ENCODE measurements at regions of chr6 and their contacts with region 1.

Region 1: DNA sequence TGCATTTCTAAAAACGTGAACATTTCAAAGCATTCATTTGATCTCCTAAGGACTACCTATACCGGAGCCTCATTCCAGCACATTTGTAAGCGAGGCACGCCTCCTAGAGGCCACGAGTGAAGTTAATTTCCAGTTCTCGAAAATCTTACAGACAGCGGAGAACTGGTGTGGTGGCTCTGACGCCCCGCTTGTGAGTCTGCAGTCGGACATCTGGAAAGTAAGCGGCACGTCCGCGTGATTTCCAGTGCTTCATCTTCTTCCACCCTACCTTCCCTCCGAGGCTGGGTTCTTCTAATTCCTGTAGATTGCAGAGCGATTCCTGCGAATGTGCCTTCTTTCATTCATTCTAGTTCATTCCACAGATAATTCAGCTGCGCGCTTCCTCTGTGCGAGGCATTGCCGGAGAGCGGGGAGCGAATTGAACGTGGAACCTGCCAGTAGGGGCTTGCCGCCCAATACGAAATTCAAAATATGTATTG is 810 bp upstream of the PRIM2 start:
- DNase-seq: peak; percentile 76
- H3K4me3 Mint-ChIP-seq: peak overlapping the region; percentile 100
- H3K27ac Mint-ChIP-seq: peak overlapping the region; percentile 95
- H3K4me1 Mint-ChIP-seq: peaks cover 23% of the 10 kb centered on the region
- H3K27me3 Mint-ChIP-seq: peaks cover 12% of the 10 kb centered on the region

Region 2: GRCh38 chr6:56904068-56904467 is 412.6 kb before region 1 on chr6:
- intact Hi-C with region 1: loop called (anchors 1 kb)
- DNase-seq: no peak
- H3K4me3 Mint-ChIP-seq: no peak overlapping the region
- H3K27ac Mint-ChIP-seq: no peak overlapping the region
- H3K4me1 Mint-ChIP-seq: no peaks in the 10 kb centered on the region
- H3K27me3 Mint-ChIP-seq: peaks cover 22% of the 10 kb centered on the region

Region 3: DNA sequence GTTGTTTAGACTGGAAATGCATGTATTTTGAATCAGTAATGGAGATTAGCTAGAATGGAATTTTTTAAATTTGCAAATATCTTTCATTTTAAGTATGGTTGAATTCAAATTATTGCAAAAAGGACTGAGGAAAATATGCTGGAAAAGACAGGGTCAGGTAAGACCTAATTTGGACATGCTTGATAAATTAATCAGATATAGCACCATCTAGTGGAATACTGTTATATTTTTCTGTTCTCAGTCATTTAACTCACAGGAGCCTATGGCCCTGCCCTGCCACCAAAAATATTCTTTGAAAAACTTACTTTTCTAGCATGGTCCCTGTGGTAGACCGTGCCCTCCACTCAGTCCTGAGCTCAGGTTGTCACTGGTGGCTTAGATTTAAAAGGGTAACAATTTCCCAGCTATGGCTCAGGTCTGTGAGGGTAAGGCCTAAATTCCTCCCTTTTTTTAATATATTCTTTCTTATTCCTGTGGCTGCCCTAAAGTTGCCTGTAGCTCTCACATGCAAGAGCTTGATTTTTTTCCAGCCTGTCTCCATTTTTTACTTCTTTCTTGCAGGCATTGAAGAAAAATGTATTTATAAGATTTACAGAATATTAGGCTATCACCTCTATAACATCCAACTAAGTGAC is 295.4 kb before region 1 on chr6:
- intact Hi-C with region 1: loop called (anchors 2 kb)
- DNase-seq: no peak
- H3K4me3 Mint-ChIP-seq: no peak overlapping the region
- H3K27ac Mint-ChIP-seq: no peak overlapping the region
- H3K4me1 Mint-ChIP-seq: no peaks in the 10 kb centered on the region
- H3K27me3 Mint-ChIP-seq: peaks cover 22% of the 10 kb centered on the region

Region 4: DNA sequence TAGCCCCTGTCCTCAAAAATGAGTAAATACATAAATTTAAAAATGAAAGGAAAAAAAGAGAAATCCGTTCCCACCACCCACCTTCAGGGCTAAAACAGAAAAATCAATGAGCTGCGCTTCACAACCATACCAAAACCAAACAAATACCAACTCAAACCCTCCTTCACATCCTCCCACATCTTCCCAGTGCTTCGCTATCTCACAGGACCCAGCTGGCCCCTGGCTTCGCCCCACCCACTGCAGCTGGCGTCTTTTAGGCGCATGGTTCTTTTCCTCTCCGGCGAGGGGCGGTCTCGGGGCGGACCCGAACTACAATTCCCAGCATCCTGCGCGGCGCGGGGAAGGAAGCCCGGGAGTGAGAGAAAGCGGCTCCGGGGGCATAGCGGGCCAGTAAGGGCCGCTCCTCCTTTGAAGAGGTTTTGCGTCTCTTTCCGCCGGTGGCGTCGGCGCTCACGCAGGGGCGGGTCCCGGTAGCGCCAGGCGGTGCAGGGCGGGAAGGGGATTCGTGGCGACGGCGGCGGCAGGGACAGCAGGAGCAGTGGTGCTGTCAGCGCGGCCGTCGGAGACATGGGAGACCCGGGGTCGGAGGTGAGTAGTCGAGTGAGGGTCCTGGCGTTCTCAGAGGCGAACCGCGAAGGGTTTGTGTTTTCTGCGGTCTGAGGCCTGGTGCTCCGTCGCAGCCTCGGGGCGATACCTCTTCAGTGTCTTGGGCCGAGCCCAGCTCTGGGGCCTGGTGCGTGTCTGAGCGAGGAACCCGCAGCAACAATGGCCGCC is 226.7 kb before region 1 on chr6 and contains the start of gene ZNF451:
- intact Hi-C with region 1: loop called (anchors 1 kb)
- DNase-seq: peak; percentile 95
- H3K4me3 Mint-ChIP-seq: peak within 1 kb of the TSS; percentile 73
- H3K27ac Mint-ChIP-seq: peak within 1 kb of the TSS; percentile 81
- H3K4me1 Mint-ChIP-seq: peaks cover 36% of the 10 kb centered on the region
- H3K27me3 Mint-ChIP-seq: no peaks in the 10 kb centered on the region
- total RNA-seq, gene ZNF451: 57.7 and 60.3 TPM in 2 replicates

Region 5: GRCh38 chr6:57190140-57190539 is 126.5 kb before region 1 on chr6:
- intact Hi-C with region 1: loop called (anchors 5 kb)
- DNase-seq: no peak
- H3K4me3 Mint-ChIP-seq: no peak overlapping the region
- H3K27ac Mint-ChIP-seq: no peak overlapping the region
- H3K4me1 Mint-ChIP-seq: peaks cover 5% of the 10 kb centered on the region
- H3K27me3 Mint-ChIP-seq: no peaks in the 10 kb centered on the region

Region 6: DNA sequence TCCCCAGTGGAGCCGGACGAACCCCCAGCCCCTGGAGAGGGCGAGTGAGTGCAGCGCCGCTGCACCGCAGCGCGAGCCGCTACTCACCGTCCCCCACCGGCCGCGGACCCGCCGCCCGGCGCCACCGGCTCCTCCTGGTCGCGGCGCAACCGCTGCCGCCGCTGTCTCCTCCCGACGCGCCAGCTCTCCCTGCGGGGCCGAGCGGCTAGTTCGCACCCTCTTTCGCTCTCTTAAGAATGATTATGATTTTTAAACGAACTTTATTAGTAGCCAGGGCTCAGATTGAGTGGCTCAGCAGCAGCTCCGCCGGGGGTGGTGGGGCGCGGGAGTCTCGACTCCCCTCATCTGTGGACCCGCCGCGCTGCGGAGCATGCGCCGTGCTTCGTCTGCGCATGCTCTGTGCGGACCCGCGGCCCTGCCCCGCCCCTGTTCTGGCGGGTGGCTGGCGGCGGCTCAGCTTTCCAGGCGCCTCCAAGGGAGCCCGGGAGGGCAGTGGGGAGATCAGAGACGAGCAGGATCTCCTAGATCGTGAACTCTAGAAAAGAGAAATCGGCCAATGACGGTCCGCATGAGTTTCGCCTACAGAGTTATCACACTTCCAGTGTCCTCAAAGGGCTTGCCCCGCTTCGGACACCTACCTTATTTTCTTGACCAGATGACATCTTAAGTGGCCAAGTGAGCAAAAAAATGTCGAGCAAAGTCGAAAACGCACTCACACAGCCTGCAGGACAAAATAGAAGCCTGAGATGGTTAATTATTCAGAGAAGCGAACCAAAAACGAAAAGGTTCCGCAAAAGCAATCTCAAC is 94.5 kb before region 1 on chr6 and contains the start of gene RAB23:
- intact Hi-C with region 1: loop called (anchors 2 kb)
- DNase-seq: peak; percentile 82
- H3K4me3 Mint-ChIP-seq: peak within 1 kb of the TSS; percentile 99
- H3K27ac Mint-ChIP-seq: peak within 1 kb of the TSS; percentile 97
- H3K4me1 Mint-ChIP-seq: peaks cover 26% of the 10 kb centered on the region
- H3K27me3 Mint-ChIP-seq: peaks cover 27% of the 10 kb centered on the region
- total RNA-seq, gene RAB23: 4.8 and 5.1 TPM in 2 replicates